ENCODE measurements at regions of chr4 and their contacts with region 1.

Region 1: GRCh38 chr4:96146686-96147085 is 306.8 kb downstream of the PDHA2 start:
- DNase-seq: no peak
- ATAC-seq: no peak
- H3K4me3 ChIP-seq: no peak overlapping the region
- H3K27ac ChIP-seq: no peak overlapping the region
- H3K4me1 ChIP-seq: no peaks in the 10 kb centered on the region
- H3K27me3 ChIP-seq: no peaks in the 10 kb centered on the region
- CTCF ChIP-seq: no peak

Region 2: GRCh38 chr4:96052827-96053226 is 93.9 kb before region 1 on chr4:
- intact Hi-C with region 1: no loop called
- DNase-seq: no peak
- ATAC-seq: no peak
- H3K4me3 ChIP-seq: no peak overlapping the region
- H3K27ac ChIP-seq: no peak overlapping the region
- H3K4me1 ChIP-seq: no peaks in the 10 kb centered on the region
- H3K27me3 ChIP-seq: no peaks in the 10 kb centered on the region
- CTCF ChIP-seq: no peak

Region 3: GRCh38 chr4:96126204-96126603 is 20.5 kb before region 1 on chr4:
- intact Hi-C with region 1: loop called in 1 of 10 experiments (anchors 1 kb)
- DNase-seq: no peak
- ATAC-seq: no peak
- H3K4me3 ChIP-seq: no peak overlapping the region
- H3K27ac ChIP-seq: no peak overlapping the region
- H3K4me1 ChIP-seq: no peaks in the 10 kb centered on the region
- H3K27me3 ChIP-seq: no peaks in the 10 kb centered on the region
- CTCF ChIP-seq: no peak

Measured in heart right ventricle (tissue), 16 donors.